Ascending aorta (tissue), 2 donors: ENCODE measurements at regions of chr17 and their contacts with region 1.

Region 1: DNA sequence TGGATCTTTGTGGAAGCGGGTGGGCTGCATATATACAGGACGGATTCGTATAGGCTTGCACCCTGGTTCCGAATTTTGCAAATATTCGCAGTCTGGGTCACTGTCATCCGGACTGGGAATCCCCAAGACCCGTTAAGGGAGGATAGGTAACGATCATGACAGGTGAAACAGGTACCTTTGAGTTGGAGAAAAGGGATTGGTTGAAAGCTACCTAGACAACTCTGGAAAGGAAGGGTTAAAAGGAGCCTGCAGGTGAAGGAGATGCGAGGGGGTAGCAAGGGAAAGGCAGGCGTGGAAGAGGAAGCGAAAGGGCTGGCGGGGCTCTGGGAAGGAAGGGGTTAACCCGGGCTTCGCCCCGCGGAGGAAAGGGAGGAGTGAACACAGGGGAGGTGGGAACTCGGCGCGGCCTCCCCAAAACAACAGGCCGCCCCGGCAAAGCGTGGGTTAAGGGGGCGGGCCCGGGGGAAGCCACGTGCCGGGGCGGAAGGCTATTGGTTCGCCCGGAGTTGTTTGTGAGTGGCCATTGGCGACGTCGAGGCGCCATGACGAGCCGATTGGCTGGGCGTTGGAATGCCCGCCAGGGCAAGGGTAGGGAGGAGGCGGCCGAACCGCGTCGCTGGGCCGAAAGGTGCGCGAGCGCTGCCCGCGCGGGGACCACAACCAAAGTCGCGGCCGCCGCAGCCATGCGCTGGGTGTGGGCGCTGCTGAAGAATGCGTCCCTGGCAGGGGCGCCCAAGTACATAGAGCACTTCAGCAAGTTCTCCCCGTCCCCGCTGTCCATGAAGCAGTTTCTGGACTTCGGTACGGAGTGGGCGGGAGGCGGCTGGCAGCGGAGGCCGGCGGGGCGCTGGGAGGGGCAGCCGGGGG is at the start of gene PDK2:
- DNase-seq: peak; percentile 90 to 98
- H3K4me3 ChIP-seq: peak within 1 kb of the TSS; percentile 78 to 84
- H3K27ac ChIP-seq: peak within 1 kb of the TSS; percentile 75 to 87
- H3K4me1 ChIP-seq: peaks cover 6 to 16% of the 10 kb centered on the region in 2 donors
- H3K27me3 ChIP-seq: no peaks in the 10 kb centered on the region
- CTCF ChIP-seq: no peak
- total RNA-seq, gene PDK2: 73.5 TPM

Region 2: GRCh38 chr17:50151937-50152547 is 57.1 kb after region 1 on chr17:
- intact Hi-C with region 1: loop called (anchors 5 kb)
- DNase-seq: peak; percentile 72 to 90
- H3K4me3 ChIP-seq: peak overlapping the region; percentile 73 to 76
- H3K27ac ChIP-seq: peak overlapping the region; percentile 91 to 93
- H3K4me1 ChIP-seq: peaks cover 31 to 54% of the 10 kb centered on the region in 2 donors
- H3K27me3 ChIP-seq: no peaks in the 10 kb centered on the region
- CTCF ChIP-seq: no peak

Region 3: GRCh38 chr17:50161023-50161910 is 66.3 kb after region 1 on chr17:
- intact Hi-C with region 1: loop called (anchors 2 kb)
- DNase-seq: peak; percentile 67 to 96
- H3K4me3 ChIP-seq: peak overlapping the region; percentile 51 to 73
- H3K27ac ChIP-seq: peak overlapping the region; percentile 80 to 89
- H3K4me1 ChIP-seq: peaks cover 9 to 29% of the 10 kb centered on the region in 2 donors
- H3K27me3 ChIP-seq: no peaks in the 10 kb centered on the region
- CTCF ChIP-seq: peak; percentile 92 to 98 (median 94)

Region 4: DNA sequence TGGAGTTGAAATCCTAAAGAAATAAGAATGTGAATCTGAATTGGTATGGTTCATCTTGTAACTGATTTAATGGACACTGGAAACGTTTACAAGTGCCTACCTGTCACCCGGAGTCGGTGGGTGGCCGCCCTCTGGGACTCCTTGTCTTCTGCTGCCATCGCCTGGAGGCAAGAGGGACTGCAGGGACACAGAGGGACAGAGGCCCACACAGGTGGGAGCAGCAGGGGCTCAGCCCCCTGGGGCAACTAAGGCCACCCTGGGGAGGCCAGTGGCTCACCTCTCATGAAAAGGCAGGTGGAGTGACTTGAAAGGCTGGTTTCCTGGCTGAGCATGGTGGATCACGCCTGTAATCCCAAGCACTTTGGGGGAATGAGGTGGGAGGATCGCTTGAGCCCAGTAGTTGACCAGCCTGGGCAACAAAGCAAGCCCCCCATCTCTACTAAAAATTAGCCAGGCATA is 202.4 kb after region 1 on chr17:
- intact Hi-C with region 1: loop called (anchors 1 kb)
- DNase-seq: peak; percentile 43 to 85
- H3K4me3 ChIP-seq: no peak overlapping the region
- H3K27ac ChIP-seq: no peak overlapping the region
- H3K4me1 ChIP-seq: no peaks in the 10 kb centered on the region
- H3K27me3 ChIP-seq: no peaks in the 10 kb centered on the region
- CTCF ChIP-seq: peak; percentile 98 to 99 (median 98)

Region 5: GRCh38 chr17:51427856-51428255 is 1332.9 kb after region 1 on chr17:
- intact Hi-C with region 1: no loop called
- DNase-seq: no peak
- H3K4me3 ChIP-seq: no peak overlapping the region
- H3K27ac ChIP-seq: no peak overlapping the region
- H3K4me1 ChIP-seq: no peaks in the 10 kb centered on the region
- H3K27me3 ChIP-seq: no peaks in the 10 kb centered on the region
- CTCF ChIP-seq: no peak